ENCODE measurements at regions of chr7 and their contacts with region 1.

Region 1: DNA sequence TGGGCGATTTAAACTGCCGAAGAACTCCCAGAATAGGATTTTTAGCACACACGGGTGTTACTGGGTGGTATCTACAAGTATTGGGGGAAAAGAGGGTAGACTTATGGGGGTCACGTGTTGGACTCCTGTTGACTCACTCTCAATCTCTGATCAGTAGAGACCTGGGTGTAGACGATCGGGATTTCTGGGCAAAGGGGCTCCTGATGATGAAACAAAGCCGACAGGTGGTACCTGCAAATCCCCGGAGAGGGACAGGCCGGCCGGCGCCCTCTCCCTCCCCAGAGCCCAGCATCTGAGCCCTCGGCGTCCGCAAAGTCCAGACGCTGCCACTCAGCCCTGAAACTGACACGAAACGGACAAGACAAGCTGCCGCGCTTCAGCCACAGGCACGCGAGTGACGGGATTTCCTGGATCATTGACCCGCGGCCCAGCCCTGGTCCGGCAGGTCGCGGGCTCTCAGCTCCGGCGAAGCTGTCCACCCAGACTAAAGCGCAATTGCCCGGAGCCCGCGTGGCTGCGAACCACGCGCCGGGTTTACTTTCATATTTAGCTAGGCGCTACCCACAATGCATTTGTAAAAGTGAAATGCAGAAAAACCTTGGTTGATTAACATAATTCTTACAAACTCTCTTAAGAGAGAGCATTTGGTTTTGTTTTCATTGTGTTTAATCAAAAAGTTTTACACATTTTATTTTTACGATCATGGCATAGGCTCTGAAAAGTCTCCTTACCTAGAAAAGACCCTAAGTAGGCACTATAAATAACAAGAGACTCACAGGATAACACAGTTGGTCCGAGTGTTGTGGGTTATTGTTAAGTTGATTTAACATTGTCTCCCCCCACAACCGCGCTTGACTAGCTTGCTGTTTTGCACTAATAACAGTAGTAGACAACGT is 56.9 kb upstream of the EZH2 start:
- DNase-seq: peak in 1 of 2 experiments; percentile 78
- H3K4me3 ChIP-seq: peak overlapping the region; percentile 78 to 88 (median 82)
- H3K27ac ChIP-seq: peak overlapping the region; percentile 17; the same call in 1 of the 2 replicates
- H3K4me1 ChIP-seq: no peaks in the 10 kb centered on the region
- H3K27me3 ChIP-seq: no peaks in the 10 kb centered on the region
- CTCF ChIP-seq: no peak
- EP300 ChIP-seq: no peak
- POLR2A ChIP-seq: peak in 1 of 2 experiments; percentile 55; a peak in 1 of 3 replicates
- RAD21 ChIP-seq: no peak

Region 2: DNA sequence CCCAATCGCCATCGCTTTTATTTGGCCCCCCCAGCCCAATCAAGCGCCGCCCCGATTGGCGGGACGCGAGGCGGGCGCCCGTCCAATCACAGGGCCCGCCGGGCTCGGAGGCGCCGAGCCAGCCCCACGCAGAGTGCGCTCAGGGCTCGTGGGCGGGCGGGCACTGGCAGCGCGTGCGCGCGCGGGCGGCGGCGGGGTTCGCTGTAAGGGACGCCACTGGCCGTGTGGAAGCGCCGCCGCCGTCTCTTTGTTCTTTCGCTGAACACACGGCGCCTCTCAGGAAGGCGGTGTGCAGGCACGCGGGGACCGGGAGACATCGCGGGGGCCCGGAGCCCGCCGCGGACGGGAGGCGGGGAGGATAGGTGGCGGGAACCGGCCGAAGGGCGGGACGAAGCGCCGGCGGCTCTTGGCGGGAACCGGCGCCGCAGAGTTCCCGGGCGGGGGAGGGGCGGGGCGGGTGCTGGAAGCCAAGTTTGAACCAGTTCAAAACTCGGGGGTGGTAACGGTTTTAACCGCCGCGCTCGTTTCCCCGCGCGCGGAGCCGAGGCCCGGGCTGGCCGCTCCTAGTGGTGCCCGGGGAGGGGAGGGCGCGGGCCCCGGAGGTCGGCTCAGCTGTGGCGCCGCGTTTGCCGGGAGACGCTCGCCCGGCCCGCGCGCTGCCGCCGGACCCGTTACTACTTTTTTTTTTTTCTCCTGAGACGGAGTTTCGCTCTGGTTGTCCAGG is 56.5 kb before region 1 on chr7:
- CTCF ChIA-PET with region 1: interaction called, 7 read pairs
- POLR2A ChIA-PET with region 1: interaction called, 11 read pairs
- DNase-seq: peak; percentile 56 to 88
- H3K4me3 ChIP-seq: peak overlapping the region; percentile 62 to 79 (median 71)
- H3K27ac ChIP-seq: peak overlapping the region; percentile 87
- H3K4me1 ChIP-seq: peaks cover 0 to 2% (median 0%) of the 10 kb centered on the region in 4 experiments; a peak in 3 of 7 replicates
- H3K27me3 ChIP-seq: no peaks in the 10 kb centered on the region
- CTCF ChIP-seq: no peak
- EP300 ChIP-seq: no peak
- POLR2A ChIP-seq: peak in 1 of 2 experiments; percentile 47; a peak in 1 of 3 replicates
- RAD21 ChIP-seq: no peak

Region 3: DNA sequence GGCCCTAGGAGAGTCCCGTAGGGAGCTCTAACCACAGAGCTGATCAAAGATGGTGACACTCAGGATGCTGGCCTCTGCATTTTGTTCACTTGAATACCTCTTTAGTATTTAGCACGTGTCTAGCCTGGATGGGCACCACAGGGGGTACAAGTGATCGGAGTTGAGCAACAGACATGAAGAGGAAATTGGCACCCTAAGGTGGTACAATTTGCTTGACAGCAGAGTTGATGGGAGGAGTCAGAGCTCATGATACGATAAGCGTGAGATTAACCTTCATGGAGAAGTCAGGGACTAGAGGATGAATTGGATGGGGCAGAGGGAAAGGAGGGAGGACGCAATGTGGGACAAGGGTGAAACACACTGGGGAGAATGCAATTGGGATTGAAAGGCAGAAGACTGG is 288.6 kb after region 1 on chr7:
- CTCF ChIA-PET with region 1: no interaction called
- POLR2A ChIA-PET with region 1: no interaction called
- DNase-seq: no peak
- H3K4me3 ChIP-seq: no peak overlapping the region
- H3K27ac ChIP-seq: no peak overlapping the region
- H3K4me1 ChIP-seq: no peaks in the 10 kb centered on the region; a peak in 1 of 7 replicates
- H3K27me3 ChIP-seq: no peaks in the 10 kb centered on the region
- CTCF ChIP-seq: no peak
- EP300 ChIP-seq: no peak
- POLR2A ChIP-seq: peak in 1 of 2 experiments; percentile 11; a peak in 1 of 3 replicates
- RAD21 ChIP-seq: no peak

Measured in H1 (cell line).